Activated naive CD4-positive, alpha-beta T cell treated with anti-CD3 and anti-CD28 coated beads for 36 hours (primary cell): ENCODE measurements at regions of chr4 and their contacts with region 1.

Region 1: DNA sequence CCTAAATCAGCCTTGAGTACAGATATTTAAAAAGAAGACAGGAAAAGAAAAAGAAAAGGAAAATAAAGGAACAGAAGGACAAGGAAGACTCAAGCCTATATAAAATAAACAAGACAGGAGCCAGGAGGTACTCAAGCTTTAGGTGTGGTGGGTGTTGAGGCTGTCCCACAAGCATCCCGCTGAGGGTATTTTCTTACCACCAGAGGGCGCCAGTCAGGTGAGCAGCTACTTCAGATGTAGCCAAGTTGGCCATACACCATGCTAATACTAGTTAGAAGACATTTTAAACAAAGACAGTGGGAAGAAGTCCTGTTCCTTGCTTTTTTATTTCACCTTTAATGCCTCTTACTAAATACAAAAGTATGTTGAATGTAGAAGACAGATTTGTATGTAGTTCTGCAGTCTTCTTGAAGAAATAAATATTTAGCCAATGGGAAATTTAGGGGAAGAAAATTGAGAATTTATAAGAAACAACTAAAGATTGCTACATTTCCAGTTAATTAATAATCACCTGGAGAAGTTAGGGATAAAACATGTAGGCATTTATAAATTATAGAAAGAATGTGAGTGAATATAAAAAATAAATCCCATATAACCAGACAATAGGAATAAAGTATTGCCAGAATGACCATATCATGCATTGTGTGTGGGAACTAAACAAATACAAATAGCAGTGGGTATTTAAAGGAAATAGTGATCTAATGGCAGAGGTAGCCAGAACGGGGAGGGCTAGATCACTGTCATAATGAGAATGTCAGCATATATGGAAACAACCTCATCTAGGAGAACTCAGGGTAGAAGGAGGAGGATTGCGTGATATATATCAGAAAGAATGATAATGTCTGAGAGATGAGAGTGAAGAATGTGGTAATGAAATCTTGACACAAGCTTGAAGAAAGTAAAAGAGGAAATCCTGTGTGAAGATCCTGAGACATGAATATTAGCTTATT is 71.0 kb downstream of the MTHFD2L start:
- DNase-seq: peak; percentile 88
- H3K4me3 Mint-ChIP-seq: no peak overlapping the region
- H3K27ac Mint-ChIP-seq: no peak overlapping the region
- H3K4me1 Mint-ChIP-seq: peaks cover 3% of the 10 kb centered on the region
- H3K27me3 Mint-ChIP-seq: no peaks in the 10 kb centered on the region

Region 2: GRCh38 chr4:73922766-73923630 is 306.0 kb before region 1 on chr4:
- CTCF ChIA-PET with region 1: no interaction called
- intact Hi-C with region 1: no loop called
- DNase-seq: no peak
- H3K4me3 Mint-ChIP-seq: no peak overlapping the region
- H3K27ac Mint-ChIP-seq: no peak overlapping the region
- H3K4me1 Mint-ChIP-seq: no peaks in the 10 kb centered on the region
- H3K27me3 Mint-ChIP-seq: peaks cover 3% of the 10 kb centered on the region

Region 3: DNA sequence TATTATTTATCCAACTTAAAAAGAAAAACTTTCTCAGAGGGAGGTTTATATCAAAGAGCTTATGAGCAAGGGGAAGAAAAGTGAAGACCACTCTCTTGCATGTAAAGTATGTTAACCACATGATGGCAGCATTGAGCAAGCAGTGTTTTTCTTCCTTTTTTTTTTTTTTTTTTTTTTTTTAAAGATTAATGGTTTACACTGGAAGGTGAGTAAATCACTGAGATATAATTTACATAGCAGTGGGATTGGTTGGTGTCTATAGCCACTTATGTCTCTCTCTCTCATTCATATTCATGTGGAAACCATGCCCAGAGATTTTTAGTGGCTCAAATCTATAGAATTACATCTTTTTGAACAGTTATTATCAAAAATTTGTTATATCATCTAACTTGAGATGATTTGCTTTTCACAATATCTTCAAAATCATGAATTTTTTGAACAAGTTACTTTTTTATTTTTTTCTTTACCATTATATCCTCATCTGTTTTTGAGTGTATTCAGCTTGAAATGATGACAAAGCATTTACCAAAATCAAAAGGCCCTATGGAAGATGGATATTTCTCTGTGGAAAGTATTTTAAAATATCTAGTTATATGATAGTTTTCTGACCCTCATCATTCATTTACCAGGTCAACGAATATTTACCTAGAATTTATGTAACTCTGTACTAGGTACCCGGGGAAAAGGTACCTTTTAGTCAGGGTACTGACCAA is 39.5 kb before region 1 on chr4:
- CTCF ChIA-PET with region 1: interaction called, 8 read pairs
- intact Hi-C with region 1: loop called (anchors 1 kb)
- DNase-seq: no peak
- H3K4me3 Mint-ChIP-seq: no peak overlapping the region
- H3K27ac Mint-ChIP-seq: no peak overlapping the region
- H3K4me1 Mint-ChIP-seq: no peaks in the 10 kb centered on the region
- H3K27me3 Mint-ChIP-seq: no peaks in the 10 kb centered on the region

Region 4: DNA sequence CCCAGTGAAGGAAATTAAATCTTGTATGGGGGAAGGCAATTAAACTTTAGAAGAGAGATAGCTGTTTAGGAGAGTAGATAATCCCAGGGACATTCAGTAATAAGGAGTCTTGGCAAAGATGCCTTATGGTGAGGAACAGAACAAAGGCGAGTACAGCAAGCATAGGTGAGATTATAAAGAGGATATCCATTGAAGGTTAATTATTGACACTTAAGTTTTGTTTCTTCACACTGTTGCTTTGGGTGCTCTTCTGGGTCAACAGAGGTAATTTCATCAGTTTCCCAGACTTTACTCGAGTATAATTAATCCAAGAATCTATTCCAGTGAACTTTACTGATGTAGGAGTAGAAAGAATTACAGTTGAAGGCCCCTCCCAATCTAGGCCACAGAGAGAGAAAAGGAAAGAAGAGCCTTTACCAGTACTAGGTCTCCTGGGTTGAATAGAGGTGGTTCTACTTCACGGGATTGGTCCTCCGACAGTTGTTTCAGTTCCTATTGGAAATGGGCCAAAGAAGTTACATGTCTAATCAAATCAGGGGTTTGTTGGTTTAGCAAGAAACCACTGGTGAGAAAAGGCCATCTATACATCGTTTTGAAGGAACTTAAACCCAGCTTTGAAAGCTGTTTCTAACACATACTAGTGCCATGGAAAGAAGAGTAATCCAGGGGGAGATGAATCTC is 106.5 kb after region 1 on chr4:
- CTCF ChIA-PET with region 1: no interaction called
- intact Hi-C with region 1: no loop called
- DNase-seq: no peak
- H3K4me3 Mint-ChIP-seq: no peak overlapping the region
- H3K27ac Mint-ChIP-seq: no peak overlapping the region
- H3K4me1 Mint-ChIP-seq: no peaks in the 10 kb centered on the region
- H3K27me3 Mint-ChIP-seq: peaks cover 14% of the 10 kb centered on the region